ENCODE measurements at regions of chr12 and their contacts with region 1.

Region 1: DNA sequence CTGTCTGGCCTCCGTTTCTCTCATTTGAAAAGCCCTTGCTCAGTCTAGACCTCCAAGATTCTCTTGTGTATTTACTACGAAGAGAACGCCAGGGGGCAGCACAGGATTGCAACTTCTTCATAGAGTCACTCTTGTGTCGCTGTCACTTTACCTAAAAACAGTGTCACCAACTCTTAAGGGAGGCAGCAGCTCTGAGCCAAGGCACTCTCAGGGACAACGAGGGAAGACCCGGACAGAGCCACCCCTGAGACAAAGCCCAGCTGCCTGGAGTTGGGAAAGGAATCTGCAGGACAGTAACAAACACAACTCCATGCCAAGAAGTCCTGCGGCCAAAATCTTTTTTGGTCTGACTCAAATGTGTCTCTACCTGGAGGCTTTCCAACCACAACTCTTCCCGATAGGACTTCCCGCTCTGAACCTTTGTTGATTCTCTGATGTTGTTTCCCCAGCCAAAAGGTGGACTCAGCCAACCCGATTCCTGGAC is 9.6 kb upstream of the RPAP3 start:
- DNase-seq: peak; percentile 82 to 92
- H3K4me3 ChIP-seq: no peak overlapping the region
- H3K27ac ChIP-seq: peak overlapping the region in 4 of 5 donors; percentile 43 to 86 (median 84)
- H3K4me1 ChIP-seq: peaks cover 26 to 40% (median 34%) of the 10 kb centered on the region in 4 donors
- H3K27me3 ChIP-seq: no peaks in the 10 kb centered on the region
- CTCF ChIP-seq: peak in 5 of 7 experiments; percentile 53 to 85 (median 75)
- EP300 ChIP-seq: no peak
- POLR2A ChIP-seq: no peak

Region 2: GRCh38 chr12:47534695-47535094 is 180.7 kb before region 1 on chr12:
- intact Hi-C with region 1: no loop called
- DNase-seq: peak in 1 of 2 donors; percentile 19
- H3K4me3 ChIP-seq: no peak overlapping the region
- H3K27ac ChIP-seq: no peak overlapping the region
- H3K4me1 ChIP-seq: no peaks in the 10 kb centered on the region
- H3K27me3 ChIP-seq: peaks cover 0 to 6% (median 0%) of the 10 kb centered on the region in 3 donors
- CTCF ChIP-seq: no peak
- EP300 ChIP-seq: no peak
- POLR2A ChIP-seq: no peak

Region 3: DNA sequence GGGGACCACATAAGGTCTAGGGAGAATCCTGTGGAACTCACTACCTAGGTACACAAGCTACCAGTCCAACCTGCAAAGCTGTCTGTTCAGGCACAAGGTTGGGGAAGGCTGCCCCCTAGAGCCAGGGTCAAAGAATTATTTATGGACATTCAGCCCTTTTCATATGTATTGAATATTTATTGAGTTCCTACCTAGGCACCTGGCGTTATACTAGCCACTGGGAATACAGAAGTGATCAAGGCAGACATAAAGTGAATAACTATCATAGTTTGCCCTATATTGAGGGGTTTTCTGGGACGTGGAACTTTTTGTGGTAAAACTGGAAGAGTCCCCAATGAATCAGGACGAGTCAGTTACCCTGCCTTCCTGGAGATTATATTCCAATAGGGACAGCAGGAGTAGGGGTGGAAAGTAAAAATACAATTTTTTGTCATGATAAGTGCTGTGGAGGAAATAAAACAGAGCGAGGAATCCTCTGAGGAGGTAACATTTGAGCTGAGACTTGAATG is 51.8 kb after region 1 on chr12:
- intact Hi-C with region 1: loop called (anchors 10 kb)
- DNase-seq: peak; percentile 67 to 85
- H3K4me3 ChIP-seq: no peak overlapping the region
- H3K27ac ChIP-seq: no peak overlapping the region
- H3K4me1 ChIP-seq: peaks cover 0 to 41% (median 5%) of the 10 kb centered on the region in 4 donors
- H3K27me3 ChIP-seq: no peaks in the 10 kb centered on the region
- CTCF ChIP-seq: peak in 5 of 7 experiments; percentile 21 to 64 (median 52)
- EP300 ChIP-seq: no peak
- POLR2A ChIP-seq: no peak

Region 4: DNA sequence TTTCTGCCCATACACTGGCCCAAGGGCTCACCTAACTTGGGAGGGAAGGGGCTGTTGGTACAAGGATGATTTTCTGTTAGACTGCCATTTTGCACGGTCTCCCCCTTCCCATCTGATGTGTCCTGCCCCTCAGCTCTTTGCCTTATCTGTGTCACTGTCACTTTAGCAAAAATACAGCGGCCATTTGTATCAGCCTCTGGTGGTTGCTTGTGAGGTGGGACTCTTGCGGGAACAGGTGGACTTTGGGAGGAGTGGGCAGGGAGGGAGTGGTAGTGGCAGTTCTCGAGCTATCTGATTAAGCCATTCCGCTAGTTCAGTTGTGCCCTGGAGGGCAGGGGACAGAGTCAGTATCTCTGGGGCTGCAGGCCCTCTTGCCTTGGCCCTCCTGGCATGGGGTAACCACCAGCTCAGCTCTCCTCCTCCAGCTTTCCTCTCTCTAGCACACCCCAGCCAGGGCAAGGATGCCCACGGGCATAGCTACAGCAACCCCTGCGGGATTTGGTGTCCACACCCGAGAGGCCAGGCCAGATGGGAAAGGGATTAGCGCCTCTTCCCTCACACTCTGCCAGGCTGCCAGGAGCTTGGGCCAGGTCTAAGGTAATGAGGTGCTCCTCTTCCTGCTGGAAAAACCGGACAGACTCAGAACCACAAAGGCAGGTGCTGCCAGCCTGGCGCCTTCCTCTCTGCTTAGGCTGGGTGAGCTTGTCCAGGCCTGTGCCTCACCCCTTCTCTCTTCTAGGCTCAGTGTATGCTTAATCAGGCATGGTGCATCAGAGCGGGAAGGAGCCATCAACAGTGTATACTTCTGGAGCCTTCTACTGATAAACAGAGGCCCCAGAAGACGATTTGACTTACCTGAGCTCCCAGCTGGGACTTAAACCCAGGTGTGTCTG is 66.3 kb after region 1 on chr12:
- intact Hi-C with region 1: loop called (anchors 5 kb)
- DNase-seq: no peak
- H3K4me3 ChIP-seq: no peak overlapping the region
- H3K27ac ChIP-seq: peak overlapping the region in 4 of 5 donors; percentile 0 to 42 (median 30)
- H3K4me1 ChIP-seq: peaks cover 22 to 54% (median 40%) of the 10 kb centered on the region in 4 donors
- H3K27me3 ChIP-seq: no peaks in the 10 kb centered on the region
- CTCF ChIP-seq: no peak
- EP300 ChIP-seq: no peak
- POLR2A ChIP-seq: no peak

Region 5: DNA sequence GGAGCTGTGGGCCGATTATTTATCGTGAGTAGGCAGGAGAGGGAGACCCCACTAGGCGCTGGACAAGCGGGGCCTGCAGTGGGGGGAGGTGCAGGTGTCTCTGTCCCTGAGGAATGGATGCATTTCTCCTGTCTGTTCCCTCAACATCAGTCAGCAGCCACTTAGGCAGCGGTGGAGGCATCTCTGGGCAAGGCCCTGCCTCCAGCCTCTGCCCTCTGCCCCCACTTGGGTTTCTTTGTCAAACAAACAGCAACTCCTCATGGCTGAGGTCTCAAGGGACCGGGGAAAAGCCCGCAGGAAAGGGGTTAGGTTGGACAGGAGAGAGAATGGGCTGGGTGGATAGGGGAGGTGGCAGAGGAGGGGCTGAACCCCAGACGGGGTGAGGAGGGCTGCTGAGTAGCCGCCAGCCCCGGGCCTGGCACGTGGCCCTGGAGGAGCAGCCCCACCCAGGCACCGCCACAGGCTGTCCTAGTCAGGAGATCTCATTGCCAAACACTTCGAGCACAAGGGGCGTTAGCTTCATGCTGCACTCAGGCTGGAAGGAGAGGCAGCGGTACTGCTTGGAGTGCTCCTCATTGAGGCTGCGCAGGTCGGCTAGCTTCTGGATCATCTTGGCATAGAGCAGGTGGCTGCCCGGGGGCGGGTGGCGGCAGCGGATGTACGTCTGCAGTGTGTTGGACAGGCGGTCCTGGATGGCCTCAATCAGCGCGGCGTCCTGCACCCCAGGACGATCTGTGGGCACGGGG is 129.0 kb after region 1 on chr12:
- intact Hi-C with region 1: loop called (anchors 10 kb)
- DNase-seq: peak in 1 of 2 donors; percentile 57
- H3K4me3 ChIP-seq: no peak overlapping the region
- H3K27ac ChIP-seq: no peak overlapping the region
- H3K4me1 ChIP-seq: peaks cover 0 to 9% (median 3%) of the 10 kb centered on the region in 4 donors
- H3K27me3 ChIP-seq: no peaks in the 10 kb centered on the region
- CTCF ChIP-seq: no peak
- EP300 ChIP-seq: no peak
- POLR2A ChIP-seq: no peak

Measured in stomach (tissue), 19 donors.